A673 (cell line): ENCODE measurements at regions of chr2 and their contacts with region 1.

Region 1: GRCh38 chr2:54558188-54559005 is 102.3 kb downstream of the SPTBN1 start:
- DNase-seq: peak; percentile 83
- H3K4me3 ChIP-seq: peak overlapping the region; percentile 69
- H3K27ac ChIP-seq: peak overlapping the region; percentile 85
- H3K4me1 ChIP-seq: peaks cover 17% of the 10 kb centered on the region
- H3K27me3 ChIP-seq: no peaks in the 10 kb centered on the region
- CTCF ChIP-seq: no peak

Region 2: DNA sequence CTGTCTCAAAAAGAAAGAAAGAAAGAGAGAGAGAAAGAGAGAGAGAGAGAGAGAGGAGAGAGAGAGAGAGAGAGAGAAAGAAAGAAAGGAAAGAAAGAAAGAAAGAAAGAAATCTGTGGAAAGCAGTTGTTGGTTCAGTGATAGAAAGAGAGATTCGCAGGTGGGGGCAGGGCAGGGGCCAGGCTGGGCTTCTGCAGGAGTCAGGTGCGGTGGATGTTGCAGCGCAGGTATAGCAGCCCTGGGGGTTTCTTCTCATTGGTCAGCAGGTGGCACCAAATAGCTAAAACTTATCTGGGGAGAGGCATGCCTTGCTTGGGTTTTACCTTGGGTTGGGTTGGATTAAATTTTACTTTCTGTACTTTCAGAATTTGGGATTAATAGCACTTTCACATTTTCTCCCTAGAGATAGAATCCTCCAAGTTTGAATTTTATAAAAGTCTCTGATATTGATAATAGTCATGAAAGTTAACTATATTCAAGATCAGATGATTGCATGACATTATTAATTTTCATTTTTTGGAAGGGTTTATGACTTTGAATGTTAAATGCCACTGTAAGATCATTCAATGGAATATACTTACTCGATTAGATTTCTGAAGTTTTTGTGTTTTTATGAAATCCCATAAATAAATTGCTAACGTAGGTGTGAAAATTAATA is 35.6 kb before region 1 on chr2:
- CTCF ChIA-PET with region 1: no interaction called
- POLR2A ChIA-PET with region 1: no interaction called
- intact Hi-C with region 1: no loop called
- DNase-seq: peak; percentile 75
- H3K4me3 ChIP-seq: no peak overlapping the region
- H3K27ac ChIP-seq: no peak overlapping the region
- H3K4me1 ChIP-seq: peaks cover 22% of the 10 kb centered on the region
- H3K27me3 ChIP-seq: no peaks in the 10 kb centered on the region
- CTCF ChIP-seq: peak; percentile 70

Region 3: GRCh38 chr2:54634564-54635511 is 76.4 kb after region 1 on chr2:
- CTCF ChIA-PET with region 1: no interaction called
- POLR2A ChIA-PET with region 1: no interaction called
- intact Hi-C with region 1: loop called (anchors 5 kb)
- DNase-seq: peak; percentile 78
- H3K4me3 ChIP-seq: no peak overlapping the region
- H3K27ac ChIP-seq: peak overlapping the region; percentile 68
- H3K4me1 ChIP-seq: peaks cover 60% of the 10 kb centered on the region
- H3K27me3 ChIP-seq: no peaks in the 10 kb centered on the region
- CTCF ChIP-seq: no peak

Region 4: GRCh38 chr2:54741250-54741649 is 182.9 kb after region 1 on chr2:
- CTCF ChIA-PET with region 1: no interaction called
- POLR2A ChIA-PET with region 1: no interaction called
- intact Hi-C with region 1: no loop called
- DNase-seq: no peak
- H3K4me3 ChIP-seq: no peak overlapping the region
- H3K27ac ChIP-seq: no peak overlapping the region
- H3K4me1 ChIP-seq: no peaks in the 10 kb centered on the region
- H3K27me3 ChIP-seq: no peaks in the 10 kb centered on the region
- CTCF ChIP-seq: no peak